ENCODE measurements at regions of chr17 and their contacts with region 1.

Region 1: DNA sequence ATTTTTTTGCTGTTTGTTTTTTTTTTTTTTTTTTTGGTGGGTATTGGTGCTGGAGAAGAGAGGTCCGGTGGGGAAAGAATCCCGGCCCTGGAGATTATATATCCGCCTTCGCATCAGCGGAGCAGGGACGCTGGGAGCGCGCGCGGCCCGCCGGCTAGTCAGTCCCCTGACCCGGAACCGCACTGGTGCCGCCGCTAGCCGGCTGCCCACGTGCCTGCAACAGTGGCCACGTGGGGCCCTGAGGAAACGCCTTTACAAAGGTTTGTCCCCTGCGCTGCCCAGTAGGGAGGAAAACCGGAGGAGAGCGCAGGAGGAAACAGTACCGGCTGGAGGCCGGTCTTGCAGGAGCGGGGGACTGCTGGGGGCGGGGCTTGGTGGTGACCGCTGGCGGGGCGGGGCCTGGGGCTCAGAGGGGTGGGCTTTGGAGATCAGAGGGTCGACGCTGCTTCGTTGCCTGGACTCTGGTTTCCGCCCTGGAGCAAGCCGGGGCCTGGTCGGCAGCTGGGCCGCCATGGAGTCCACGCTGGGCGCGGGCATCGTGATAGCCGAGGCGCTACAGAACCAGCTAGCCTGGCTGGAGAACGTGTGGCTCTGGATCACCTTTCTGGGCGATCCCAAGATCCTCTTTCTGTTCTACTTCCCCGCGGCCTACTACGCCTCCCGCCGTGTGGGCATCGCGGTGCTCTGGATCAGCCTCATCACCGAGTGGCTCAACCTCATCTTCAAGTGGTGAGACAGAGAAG is at the start of gene G6PC3:
- DNase-seq: peak; percentile 99 to 100
- ATAC-seq: peak; percentile 80 to 92
- H3K4me3 ChIP-seq: peak within 1 kb of the TSS; percentile 69
- H3K27ac ChIP-seq: peak within 1 kb of the TSS; percentile 92 to 93
- H3K4me1 ChIP-seq: peaks cover 19% of the 10 kb centered on the region
- CTCF ChIP-seq: no peak
- EP300 ChIP-seq: no peak
- POLR2A ChIP-seq: peak; percentile 97
- RAD21 ChIP-seq: peak; percentile 4 to 43; a peak in 3 of 5 replicates
- polyA plus RNA-seq, gene G6PC3: 104 TPM in 2 replicates

Region 2: GRCh38 chr17:44044067-44044466 is 26.6 kb before region 1 on chr17:
- CTCF ChIA-PET with region 1: interaction called, 13 read pairs
- POLR2A ChIA-PET with region 1: interaction called, 7 read pairs
- DNase-seq: no peak
- ATAC-seq: no peak
- H3K4me3 ChIP-seq: no peak overlapping the region
- H3K27ac ChIP-seq: 0 out of 6 replicates have a peak overlapping the region, but pooled peaks of 1 of the 2 experiments have one; percentile 0
- H3K4me1 ChIP-seq: peaks cover 11% of the 10 kb centered on the region
- CTCF ChIP-seq: no peak
- EP300 ChIP-seq: no peak
- POLR2A ChIP-seq: no peak
- RAD21 ChIP-seq: no peak

Region 3: GRCh38 chr17:44053125-44053872 is 17.3 kb before region 1 on chr17:
- CTCF ChIA-PET with region 1: interaction called, 5 read pairs
- POLR2A ChIA-PET with region 1: interaction called, 10 read pairs
- DNase-seq: no peak
- ATAC-seq: peak; percentile 52 to 63; a peak in 4 of 6 replicates
- H3K4me3 ChIP-seq: no peak overlapping the region
- H3K27ac ChIP-seq: no peak overlapping the region
- H3K4me1 ChIP-seq: peaks cover 15% of the 10 kb centered on the region
- CTCF ChIP-seq: no peak
- EP300 ChIP-seq: no peak
- POLR2A ChIP-seq: no peak
- RAD21 ChIP-seq: no peak

Region 4: GRCh38 chr17:44095642-44096496 is 25.2 kb after region 1 on chr17:
- CTCF ChIA-PET with region 1: interaction called, 10 read pairs
- POLR2A ChIA-PET with region 1: interaction called, 5 read pairs
- DNase-seq: peak; percentile 88 to 94
- ATAC-seq: peak; percentile 85 to 87
- H3K4me3 ChIP-seq: peak overlapping the region; percentile 30
- H3K27ac ChIP-seq: peak overlapping the region; percentile 92 to 94
- H3K4me1 ChIP-seq: peaks cover 32% of the 10 kb centered on the region
- CTCF ChIP-seq: no peak; the same call in 2 of the 3 replicates
- EP300 ChIP-seq: no peak
- POLR2A ChIP-seq: peak; percentile 61
- RAD21 ChIP-seq: peak in 1 of 2 experiments; percentile 40; a peak in 3 of 5 replicates

Region 5: DNA sequence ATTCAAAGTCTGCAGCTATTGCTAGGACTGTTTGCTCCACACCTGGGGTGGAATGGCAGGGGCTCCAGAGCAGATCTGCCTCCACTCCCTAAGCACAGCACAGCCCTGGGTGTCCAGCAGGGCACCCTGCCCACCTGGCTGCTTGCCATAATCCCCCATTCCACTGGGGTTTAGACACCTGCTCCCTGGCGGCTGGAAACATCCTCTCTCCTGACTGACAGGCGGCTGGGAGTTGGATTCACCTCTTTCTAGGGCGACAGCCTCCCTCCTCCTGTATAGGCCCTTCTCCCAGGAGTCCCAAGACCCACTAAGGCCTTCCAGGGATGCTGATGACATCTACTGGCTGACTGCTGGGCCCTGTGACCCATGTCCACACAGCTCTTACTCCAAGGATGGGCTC is 34.9 kb after region 1 on chr17:
- CTCF ChIA-PET with region 1: interaction called, 7 read pairs
- POLR2A ChIA-PET with region 1: interaction called, 13 read pairs
- DNase-seq: no peak
- ATAC-seq: no peak
- H3K4me3 ChIP-seq: no peak overlapping the region
- H3K27ac ChIP-seq: no peak overlapping the region
- H3K4me1 ChIP-seq: peaks cover 35% of the 10 kb centered on the region
- CTCF ChIP-seq: no peak
- EP300 ChIP-seq: no peak
- POLR2A ChIP-seq: no peak
- RAD21 ChIP-seq: no peak

Region 6: DNA sequence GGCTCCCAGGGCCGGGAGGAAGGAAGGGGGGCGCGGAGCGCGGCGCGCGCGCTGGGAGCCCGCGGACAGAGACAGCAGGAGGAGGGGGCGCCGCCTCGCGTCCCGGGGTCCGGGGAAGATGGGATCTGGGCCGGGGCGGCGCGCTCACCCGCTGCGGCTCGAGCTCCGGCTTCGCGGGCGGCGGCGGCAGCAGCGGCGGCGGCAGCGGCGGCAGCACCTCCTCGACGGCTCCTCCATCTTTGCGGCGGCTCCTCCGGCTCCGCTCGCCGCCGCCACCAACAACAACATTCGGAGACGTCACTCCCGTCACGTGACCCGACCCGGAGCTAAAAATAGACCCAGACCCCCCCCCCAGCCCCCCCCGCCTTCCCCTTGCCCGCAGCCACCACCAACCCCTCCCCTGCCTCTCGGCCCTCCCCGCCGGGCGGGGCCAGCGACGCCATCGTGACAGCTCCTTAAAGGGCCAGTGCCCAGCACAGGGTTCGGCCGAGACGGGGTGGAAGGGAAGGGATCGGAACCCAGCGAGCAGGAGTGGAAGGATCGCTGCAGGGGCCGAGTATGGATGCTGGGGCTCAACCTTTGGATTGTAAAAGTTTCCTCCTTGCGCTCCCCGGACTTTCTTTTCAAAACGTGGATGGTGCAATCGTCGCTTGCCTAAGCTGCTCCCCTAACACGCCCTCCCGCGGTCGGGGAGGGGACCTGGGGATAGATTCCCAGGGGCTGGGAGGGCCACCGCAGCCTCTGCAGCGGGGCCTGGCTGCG is 52.9 kb after region 1 on chr17 and contains the start of gene HDAC5:
- CTCF ChIA-PET with region 1: interaction called, 3 read pairs
- POLR2A ChIA-PET with region 1: interaction called, 16 read pairs
- DNase-seq: peak; percentile 92 to 96
- ATAC-seq: peak; percentile 84 to 92
- H3K4me3 ChIP-seq: peak within 1 kb of the TSS; percentile 81
- H3K27ac ChIP-seq: peak within 1 kb of the TSS; percentile 87 to 93
- H3K4me1 ChIP-seq: peaks cover 28% of the 10 kb centered on the region
- CTCF ChIP-seq: peak; percentile 68
- EP300 ChIP-seq: no peak
- POLR2A ChIP-seq: peak; percentile 60
- RAD21 ChIP-seq: peak; percentile 53 to 63
- polyA plus RNA-seq, gene HDAC5: 3.1 and 5.7 TPM in 2 replicates